Right ventricle myocardium inferior (tissue), 1 donor: ENCODE measurements at regions of chr7 and their contacts with region 1.

Region 1: GRCh38 chr7:48875045-48875916 is 49.1 kb upstream of the CDC14C start:
- DNase-seq: no peak
- ATAC-seq: peak; percentile 71

Region 2: GRCh38 chr7:48299580-48300169 is 575.6 kb before region 1 on chr7:
- intact Hi-C with region 1: loop called (anchors 10 kb)
- DNase-seq: no peak
- ATAC-seq: peak; percentile 70

Region 3: DNA sequence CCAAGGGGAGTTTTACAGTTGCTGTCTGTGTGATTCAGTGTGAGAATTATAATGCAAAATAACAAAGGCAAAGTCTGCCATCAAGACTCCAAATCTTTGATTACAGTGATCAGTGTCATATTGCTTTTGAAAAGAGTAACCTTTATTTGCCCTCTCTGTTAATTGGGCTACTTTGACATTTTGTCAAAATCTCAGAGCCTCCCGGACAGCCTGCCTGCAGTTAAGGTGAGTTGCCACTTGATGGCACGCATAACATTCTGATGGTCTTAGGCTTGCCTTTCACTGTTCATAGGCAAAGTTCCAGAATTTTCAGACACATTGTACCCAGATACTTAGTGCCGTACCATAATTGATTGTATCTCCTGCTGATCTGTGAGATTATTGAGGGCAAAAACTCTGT is 450.6 kb before region 1 on chr7:
- intact Hi-C with region 1: loop called (anchors 2 kb)
- DNase-seq: no peak
- ATAC-seq: no peak

Region 4: GRCh38 chr7:48617993-48618392 is 257.3 kb before region 1 on chr7:
- intact Hi-C with region 1: loop called (anchors 5 kb)
- DNase-seq: no peak
- ATAC-seq: no peak